ENCODE measurements at regions of chr18 and their contacts with region 1.

Region 1: DNA sequence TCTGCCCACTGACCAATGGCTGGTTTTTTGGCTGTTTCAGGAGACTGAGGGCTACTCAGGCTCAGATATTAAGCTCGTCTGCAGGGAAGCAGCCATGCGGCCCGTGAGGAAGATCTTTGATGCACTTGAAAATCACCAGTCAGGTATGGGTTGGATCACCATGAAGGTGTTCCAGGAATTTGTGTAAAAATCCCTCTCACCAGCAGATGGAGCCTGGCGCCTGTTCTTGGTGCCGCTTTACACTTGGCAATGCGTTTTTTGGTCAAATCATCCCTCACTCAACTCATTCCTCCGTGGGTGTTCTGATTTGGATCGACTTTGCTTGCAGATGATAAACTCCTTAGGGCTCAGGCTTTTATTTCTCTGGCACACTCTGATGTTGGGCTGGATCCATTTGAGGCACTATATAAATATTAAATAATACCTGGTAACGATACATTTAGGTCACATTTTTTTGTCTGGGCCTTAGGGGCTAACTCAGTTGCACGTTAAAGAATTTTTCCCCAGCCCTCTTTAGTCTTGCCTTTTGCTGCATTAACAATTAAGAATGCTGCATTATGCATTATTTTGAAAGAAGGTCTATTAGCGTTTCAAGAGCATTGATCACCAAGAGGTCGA is 50.0 kb downstream of the HDHD2 start:
- DNase-seq: no peak
- ATAC-seq: peak; percentile 89
- H3K4me3 ChIP-seq: no peak overlapping the region
- H3K27ac ChIP-seq: no peak overlapping the region
- H3K4me1 ChIP-seq: no peaks in the 10 kb centered on the region
- H3K27me3 ChIP-seq: no peaks in the 10 kb centered on the region
- CTCF ChIP-seq: peak; percentile 73 to 91 (median 75); a peak in 5 of 6 replicates
- EP300 ChIP-seq: no peak
- POLR2A ChIP-seq: no peak
- RAD21 ChIP-seq: peak; percentile 94

Region 2: GRCh38 chr18:47050468-47050867 is 49.9 kb before region 1 on chr18:
- CTCF ChIA-PET with region 1: no interaction called
- POLR2A ChIA-PET with region 1: no interaction called
- RAD21 ChIA-PET with region 1: no interaction called
- SMC1A ChIA-PET with region 1: no interaction called
- in situ Hi-C with region 1: no loop called
- intact Hi-C with region 1: no loop called
- DNase-seq: no peak
- ATAC-seq: peak; percentile 71
- H3K4me3 ChIP-seq: no peak overlapping the region
- H3K27ac ChIP-seq: no peak overlapping the region
- H3K4me1 ChIP-seq: no peaks in the 10 kb centered on the region
- H3K27me3 ChIP-seq: no peaks in the 10 kb centered on the region
- CTCF ChIP-seq: peak; percentile 68 to 76 (median 70)
- EP300 ChIP-seq: no peak
- POLR2A ChIP-seq: no peak
- RAD21 ChIP-seq: peak; percentile 71

Region 3: DNA sequence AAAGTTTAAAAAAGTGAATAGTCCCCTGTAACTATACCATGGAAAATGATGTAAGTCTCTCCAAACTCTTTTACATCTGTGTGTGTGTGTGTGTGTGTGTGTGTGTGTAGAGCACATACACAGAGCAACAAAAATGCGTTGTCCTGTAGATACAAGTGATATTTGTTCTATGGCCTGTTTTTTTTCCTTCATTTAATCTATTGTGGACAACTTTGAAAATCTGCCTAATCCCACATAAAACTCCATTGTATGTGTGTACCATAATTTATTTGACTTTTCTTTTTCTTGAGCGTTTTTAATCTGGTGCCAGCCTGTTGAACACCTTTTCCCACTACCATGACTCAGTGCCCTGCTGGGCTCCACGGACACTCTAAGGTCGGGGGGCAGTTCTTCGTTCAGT is 12.6 kb before region 1 on chr18:
- CTCF ChIA-PET with region 1: interaction called, 10 read pairs
- POLR2A ChIA-PET with region 1: interaction called, 3 read pairs
- RAD21 ChIA-PET with region 1: no interaction called
- SMC1A ChIA-PET with region 1: interaction called, 3 read pairs
- in situ Hi-C with region 1: no loop called
- intact Hi-C with region 1: no loop called
- DNase-seq: no peak
- ATAC-seq: no peak
- H3K4me3 ChIP-seq: no peak overlapping the region
- H3K27ac ChIP-seq: no peak overlapping the region
- H3K4me1 ChIP-seq: no peaks in the 10 kb centered on the region
- H3K27me3 ChIP-seq: no peaks in the 10 kb centered on the region
- CTCF ChIP-seq: no peak
- EP300 ChIP-seq: no peak
- POLR2A ChIP-seq: no peak
- RAD21 ChIP-seq: no peak

Region 4: DNA sequence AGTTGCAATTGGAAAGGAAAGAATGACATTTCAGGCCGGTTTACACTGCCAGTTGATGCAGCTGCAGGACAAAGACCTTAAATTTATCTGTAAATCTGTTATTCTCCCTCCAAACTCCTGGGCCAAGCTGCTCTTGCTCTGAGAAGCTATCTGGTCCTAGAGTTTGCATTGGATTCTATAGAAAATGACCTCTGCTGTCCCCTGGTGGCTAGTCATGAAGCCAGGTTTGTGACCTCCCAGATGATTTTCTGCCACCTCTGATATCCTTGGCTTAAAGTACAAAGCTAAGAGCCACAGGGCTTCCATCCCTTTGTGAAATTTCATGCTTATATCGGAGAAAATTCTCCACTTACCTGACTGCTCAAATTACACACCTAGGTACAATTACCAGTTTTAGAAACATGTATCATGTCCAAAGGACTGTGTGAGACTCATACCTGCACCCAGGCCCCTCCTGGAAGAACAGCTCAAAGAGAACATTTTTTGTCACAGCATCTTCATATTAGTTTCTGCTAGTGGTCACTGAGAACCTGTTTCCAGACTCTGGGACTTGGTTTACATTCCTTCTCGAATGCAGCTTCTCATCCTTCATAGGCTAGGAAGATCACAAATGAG is 104.7 kb after region 1 on chr18:
- CTCF ChIA-PET with region 1: interaction called, 50 read pairs
- POLR2A ChIA-PET with region 1: no interaction called
- RAD21 ChIA-PET with region 1: interaction called, 21 read pairs
- SMC1A ChIA-PET with region 1: interaction called, 47 read pairs
- in situ Hi-C with region 1: loop called (anchors 5 kb)
- intact Hi-C with region 1: loop called (anchors 1 kb)
- DNase-seq: no peak
- ATAC-seq: peak; percentile 82
- H3K4me3 ChIP-seq: no peak overlapping the region
- H3K27ac ChIP-seq: no peak overlapping the region
- H3K4me1 ChIP-seq: no peaks in the 10 kb centered on the region
- H3K27me3 ChIP-seq: peaks cover 0 to 1% of the 10 kb centered on the region in 2 experiments; a peak in 3 of 4 replicates
- CTCF ChIP-seq: peak; percentile 86 to 90 (median 89)
- EP300 ChIP-seq: no peak
- POLR2A ChIP-seq: no peak
- RAD21 ChIP-seq: peak; percentile 88

Region 5: GRCh38 chr18:47215554-47216138 is 115.3 kb after region 1 on chr18:
- CTCF ChIA-PET with region 1: interaction called, 12 read pairs
- POLR2A ChIA-PET with region 1: no interaction called
- RAD21 ChIA-PET with region 1: no interaction called
- SMC1A ChIA-PET with region 1: no interaction called
- in situ Hi-C with region 1: no loop called
- intact Hi-C with region 1: no loop called
- DNase-seq: peak; percentile 3
- ATAC-seq: peak; percentile 72
- H3K4me3 ChIP-seq: no peak overlapping the region
- H3K27ac ChIP-seq: no peak overlapping the region
- H3K4me1 ChIP-seq: no peaks in the 10 kb centered on the region
- H3K27me3 ChIP-seq: peaks cover 0 to 7% of the 10 kb centered on the region in 2 experiments; a peak in 1 of 4 replicates
- CTCF ChIP-seq: peak; percentile 55 to 61 (median 60); a peak in 5 of 6 replicates
- EP300 ChIP-seq: no peak
- POLR2A ChIP-seq: no peak
- RAD21 ChIP-seq: peak; percentile 91

Region 6: DNA sequence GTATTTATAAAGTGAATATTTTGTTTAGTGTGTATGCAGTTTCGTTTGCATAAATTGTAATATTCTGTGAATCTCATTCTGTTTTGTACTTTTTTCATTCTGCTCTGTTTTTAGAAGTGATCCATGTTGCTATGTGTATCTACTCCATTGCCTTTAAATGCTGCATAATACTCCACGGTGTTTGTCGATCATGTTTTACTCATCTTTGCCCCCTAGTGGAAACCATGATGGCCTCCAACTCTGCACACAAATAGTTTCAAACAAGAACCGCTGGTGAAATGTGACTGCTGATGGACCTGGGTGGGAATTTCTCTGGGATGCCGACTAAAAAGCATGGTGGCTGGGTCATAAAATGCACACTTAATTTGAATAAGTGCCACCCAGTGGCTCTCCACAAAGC is 183.2 kb after region 1 on chr18:
- CTCF ChIA-PET with region 1: interaction called, 3 read pairs
- POLR2A ChIA-PET with region 1: no interaction called
- RAD21 ChIA-PET with region 1: no interaction called
- SMC1A ChIA-PET with region 1: no interaction called
- in situ Hi-C with region 1: no loop called
- intact Hi-C with region 1: loop called (anchors 5 kb)
- DNase-seq: no peak
- ATAC-seq: peak; percentile 77
- H3K4me3 ChIP-seq: no peak overlapping the region
- H3K27ac ChIP-seq: no peak overlapping the region
- H3K4me1 ChIP-seq: no peaks in the 10 kb centered on the region
- H3K27me3 ChIP-seq: no peaks in the 10 kb centered on the region
- CTCF ChIP-seq: peak; percentile 25 to 47 (median 31); a peak in 5 of 6 replicates
- EP300 ChIP-seq: no peak
- POLR2A ChIP-seq: no peak
- RAD21 ChIP-seq: no peak

Region 7: DNA sequence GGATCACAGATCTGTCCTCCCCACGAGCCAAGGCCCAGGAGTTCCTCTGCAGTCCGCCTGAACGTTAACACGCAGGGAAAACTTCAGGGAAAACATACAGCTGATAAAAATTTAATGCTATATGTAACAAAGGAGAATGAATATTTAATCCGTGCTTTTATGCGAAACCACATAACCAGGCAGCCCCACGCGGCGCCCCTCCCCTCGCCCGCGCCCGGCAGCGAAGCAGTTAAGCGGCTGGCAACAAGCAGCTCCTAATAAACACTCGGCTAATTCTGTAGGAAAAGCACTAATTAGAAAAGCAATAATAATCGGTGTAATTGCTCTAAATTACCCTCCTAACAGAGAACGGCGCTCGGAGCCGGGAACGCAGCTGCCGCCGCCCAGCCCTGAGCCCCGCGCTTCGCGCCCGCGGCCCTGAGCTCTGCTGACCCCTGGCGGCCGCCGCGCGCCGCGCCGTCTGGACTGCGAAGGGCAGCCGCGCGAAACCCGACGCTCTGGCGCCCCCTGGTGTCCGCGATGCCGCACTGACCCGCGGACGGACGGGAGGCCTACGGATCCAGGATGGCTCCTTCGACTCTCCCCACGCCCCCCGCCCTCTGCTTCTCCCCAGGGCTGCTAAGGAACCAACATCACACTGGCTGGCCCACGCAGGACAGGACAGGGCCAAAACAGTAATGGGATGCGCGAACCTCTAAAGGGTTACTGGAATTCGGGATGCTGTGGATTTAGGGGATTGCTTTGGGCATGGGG is 648.7 kb after region 1 on chr18:
- CTCF ChIA-PET with region 1: interaction called, 3 read pairs
- POLR2A ChIA-PET with region 1: no interaction called
- RAD21 ChIA-PET with region 1: no interaction called
- SMC1A ChIA-PET with region 1: interaction called, 3 read pairs
- in situ Hi-C with region 1: loop called (anchors 5 kb)
- intact Hi-C with region 1: loop called (anchors 2 kb)
- DNase-seq: no peak
- ATAC-seq: peak; percentile 97
- H3K4me3 ChIP-seq: no peak overlapping the region
- H3K27ac ChIP-seq: no peak overlapping the region
- H3K4me1 ChIP-seq: no peaks in the 10 kb centered on the region
- H3K27me3 ChIP-seq: no peaks in the 10 kb centered on the region; a peak in 1 of 4 replicates
- CTCF ChIP-seq: peak; percentile 94 to 99 (median 99); a peak in 5 of 6 replicates
- EP300 ChIP-seq: no peak
- POLR2A ChIP-seq: no peak
- RAD21 ChIP-seq: peak; percentile 98

Region 8: DNA sequence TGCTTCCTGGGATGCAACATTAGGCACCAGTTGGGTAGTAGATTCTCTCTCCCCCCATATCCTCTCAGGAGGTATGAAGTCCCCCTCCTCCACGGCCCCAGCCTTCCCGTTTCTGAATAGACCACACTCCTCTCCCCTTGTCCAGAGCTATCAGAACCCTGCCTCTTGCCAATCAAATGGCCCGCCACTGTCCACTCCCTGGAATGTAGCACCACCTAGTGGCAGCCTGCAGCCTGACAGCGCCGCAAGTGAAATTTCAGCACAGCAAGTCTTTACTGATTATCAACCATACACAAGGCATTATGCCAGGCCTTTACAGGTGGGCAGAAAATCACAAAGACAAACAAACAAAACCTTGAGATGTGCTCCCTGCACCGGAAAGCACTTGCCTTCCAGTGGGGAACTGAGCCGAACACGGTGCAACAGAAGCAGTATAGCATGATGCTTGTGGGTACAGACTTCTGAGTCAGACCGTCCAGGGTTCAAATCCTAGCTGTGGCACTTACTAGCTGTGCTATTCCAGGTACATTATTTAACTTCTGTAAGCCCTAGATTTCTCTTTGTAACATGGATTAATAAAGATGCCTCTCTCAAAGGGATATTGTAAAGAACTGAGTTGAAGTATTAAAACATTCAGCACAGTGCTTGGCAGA is 656.2 kb after region 1 on chr18:
- CTCF ChIA-PET with region 1: no interaction called
- POLR2A ChIA-PET with region 1: no interaction called
- RAD21 ChIA-PET with region 1: no interaction called
- SMC1A ChIA-PET with region 1: no interaction called
- in situ Hi-C with region 1: loop called (anchors 5 kb)
- intact Hi-C with region 1: loop called (anchors 2 kb)
- DNase-seq: no peak
- ATAC-seq: peak; percentile 88
- H3K4me3 ChIP-seq: no peak overlapping the region
- H3K27ac ChIP-seq: no peak overlapping the region
- H3K4me1 ChIP-seq: no peaks in the 10 kb centered on the region
- H3K27me3 ChIP-seq: no peaks in the 10 kb centered on the region; a peak in 1 of 4 replicates
- CTCF ChIP-seq: peak; percentile 88 to 98 (median 94)
- EP300 ChIP-seq: no peak
- POLR2A ChIP-seq: no peak
- RAD21 ChIP-seq: peak; percentile 78